Aorta (tissue), 5 donors: ENCODE measurements at regions of chr18 and their contacts with region 1.

Region 1: GRCh38 chr18:10032331-10033015 is 118.7 kb downstream of the VAPA start:
- DNase-seq: peak in 1 of 2 donors; percentile 81
- ATAC-seq: peak; percentile 44
- H3K4me3 ChIP-seq: no peak overlapping the region
- H3K27ac ChIP-seq: peak overlapping the region in 1 of 2 donors; percentile 1
- H3K4me1 ChIP-seq: no peaks in the 10 kb centered on the region
- H3K27me3 ChIP-seq: no peaks in the 10 kb centered on the region

Region 2: DNA sequence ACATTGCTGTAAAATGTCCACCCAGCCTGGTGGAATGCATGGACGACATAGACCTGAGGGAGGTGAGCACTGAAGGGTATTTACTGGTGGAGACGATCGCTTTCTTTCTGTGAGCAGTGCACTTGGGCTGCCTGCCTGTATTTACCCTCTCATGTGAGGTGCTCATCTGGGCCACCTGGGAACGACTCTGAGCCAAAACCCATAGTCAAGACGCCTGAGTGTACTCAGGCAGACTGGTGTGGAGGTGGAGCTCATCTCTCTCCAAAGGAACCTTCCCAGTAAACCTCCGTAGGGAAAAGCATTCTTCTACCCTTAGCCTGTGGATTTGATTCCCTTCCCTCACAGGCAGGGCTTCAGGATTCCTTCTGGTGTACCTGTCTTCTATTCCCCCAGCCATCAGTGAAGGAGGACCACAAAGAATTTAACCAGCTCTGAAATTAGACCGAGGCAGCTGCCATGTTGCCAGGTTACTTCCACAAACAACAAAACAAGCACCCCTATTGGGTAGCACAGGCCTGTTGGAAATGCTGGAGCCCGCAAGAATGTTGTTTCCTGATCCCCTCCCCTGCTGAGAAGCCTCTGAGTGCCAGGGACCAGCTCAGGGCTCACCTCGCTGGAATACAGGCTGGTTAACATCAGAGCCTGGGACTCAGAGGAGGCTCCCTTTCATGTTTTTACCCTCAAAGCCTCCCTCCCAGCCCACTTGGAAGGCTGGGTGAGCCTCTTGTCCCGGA is 194.2 kb before region 1 on chr18:
- intact Hi-C with region 1: no loop called
- DNase-seq: no peak
- ATAC-seq: no peak
- H3K4me3 ChIP-seq: no peak overlapping the region
- H3K27ac ChIP-seq: peak overlapping the region in 1 of 2 donors; percentile 26
- H3K4me1 ChIP-seq: peaks cover 0 to 2% of the 10 kb centered on the region in 2 donors
- H3K27me3 ChIP-seq: no peaks in the 10 kb centered on the region

Region 3: DNA sequence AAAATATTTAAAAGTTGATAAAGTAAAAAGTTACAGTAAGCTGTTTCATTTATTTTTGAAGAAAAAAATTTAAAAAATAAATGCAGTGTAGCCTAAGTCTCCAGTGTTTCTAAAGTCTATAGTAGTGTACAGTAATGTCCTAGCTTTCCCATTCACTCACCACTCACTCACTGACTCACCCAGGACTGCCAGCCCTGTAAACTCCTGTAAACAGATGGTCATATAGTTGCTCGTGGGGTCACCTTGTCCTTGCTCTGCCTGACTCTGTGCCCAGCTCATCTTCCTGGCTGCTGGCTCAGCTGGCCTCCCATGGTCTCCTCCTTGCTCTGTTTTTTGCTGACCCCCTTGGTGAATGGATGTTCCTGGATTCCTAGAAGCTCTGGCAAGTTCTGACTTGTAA is 61.7 kb after region 1 on chr18:
- intact Hi-C with region 1: loop called in 1 of 2 experiments (anchors 10 kb)
- DNase-seq: no peak
- ATAC-seq: no peak
- H3K4me3 ChIP-seq: no peak overlapping the region
- H3K27ac ChIP-seq: no peak overlapping the region
- H3K4me1 ChIP-seq: no peaks in the 10 kb centered on the region
- H3K27me3 ChIP-seq: no peaks in the 10 kb centered on the region